Activated naive CD4-positive, alpha-beta T cell treated with anti-CD3 and anti-CD28 coated beads for 36 hours (primary cell): ENCODE measurements at regions of chr10 and their contacts with region 1.

Region 1: GRCh38 chr10:88091490-88092105 is 228.2 kb downstream of the PTEN start:
- DNase-seq: peak; percentile 91
- H3K4me3 Mint-ChIP-seq: no peak overlapping the region
- H3K27ac Mint-ChIP-seq: no peak overlapping the region
- H3K4me1 Mint-ChIP-seq: peaks cover 34% of the 10 kb centered on the region
- H3K27me3 Mint-ChIP-seq: peaks cover 19% of the 10 kb centered on the region

Region 2: GRCh38 chr10:87646939-87647338 is 444.7 kb before region 1 on chr10:
- CTCF ChIA-PET with region 1: no interaction called
- intact Hi-C with region 1: loop called (anchors 10 kb)
- DNase-seq: peak; percentile 42
- H3K4me3 Mint-ChIP-seq: no peak overlapping the region
- H3K27ac Mint-ChIP-seq: no peak overlapping the region
- H3K4me1 Mint-ChIP-seq: peaks cover 20% of the 10 kb centered on the region
- H3K27me3 Mint-ChIP-seq: peaks cover 4% of the 10 kb centered on the region

Region 3: DNA sequence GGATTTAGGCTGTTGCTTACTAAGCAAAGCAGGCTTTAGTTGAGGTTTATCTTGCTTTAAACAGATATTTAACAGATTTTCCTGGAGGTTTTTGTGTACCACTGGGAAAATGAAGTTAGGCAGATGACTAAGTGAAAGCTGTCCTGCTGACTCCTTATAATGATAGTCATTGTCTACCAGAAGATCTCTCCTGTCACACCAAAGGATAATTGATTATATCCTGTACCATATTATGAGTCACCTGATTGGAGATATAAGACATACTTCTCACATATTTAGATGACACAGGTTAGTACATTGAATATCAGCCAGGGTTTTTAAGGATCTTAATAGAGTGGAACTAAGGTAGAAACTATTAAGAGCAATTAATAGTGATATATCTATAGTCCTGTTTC is 159.8 kb before region 1 on chr10:
- CTCF ChIA-PET with region 1: no interaction called
- intact Hi-C with region 1: loop called (anchors 1 kb)
- DNase-seq: no peak
- H3K4me3 Mint-ChIP-seq: no peak overlapping the region
- H3K27ac Mint-ChIP-seq: no peak overlapping the region
- H3K4me1 Mint-ChIP-seq: peaks cover 46% of the 10 kb centered on the region
- H3K27me3 Mint-ChIP-seq: no peaks in the 10 kb centered on the region

Region 4: GRCh38 chr10:88138319-88138848 is 46.8 kb after region 1 on chr10:
- CTCF ChIA-PET with region 1: no interaction called
- intact Hi-C with region 1: loop called (anchors 1 kb)
- DNase-seq: no peak
- H3K4me3 Mint-ChIP-seq: no peak overlapping the region
- H3K27ac Mint-ChIP-seq: no peak overlapping the region
- H3K4me1 Mint-ChIP-seq: peaks cover 9% of the 10 kb centered on the region
- H3K27me3 Mint-ChIP-seq: no peaks in the 10 kb centered on the region

Region 5: GRCh38 chr10:88409236-88409635 is 317.6 kb after region 1 on chr10:
- CTCF ChIA-PET with region 1: no interaction called
- intact Hi-C with region 1: loop called (anchors 1 kb)
- DNase-seq: no peak
- H3K4me3 Mint-ChIP-seq: no peak overlapping the region
- H3K27ac Mint-ChIP-seq: no peak overlapping the region
- H3K4me1 Mint-ChIP-seq: peaks cover 8% of the 10 kb centered on the region
- H3K27me3 Mint-ChIP-seq: no peaks in the 10 kb centered on the region

Region 6: GRCh38 chr10:88791924-88792323 is 700.3 kb after region 1 on chr10:
- CTCF ChIA-PET with region 1: no interaction called
- intact Hi-C with region 1: loop called (anchors 1 kb)
- DNase-seq: peak; percentile 25
- H3K4me3 Mint-ChIP-seq: no peak overlapping the region
- H3K27ac Mint-ChIP-seq: no peak overlapping the region
- H3K4me1 Mint-ChIP-seq: peaks cover 19% of the 10 kb centered on the region
- H3K27me3 Mint-ChIP-seq: peaks cover 4% of the 10 kb centered on the region